ENCODE measurements at regions of chr2 and their contacts with region 1.

Region 1: GRCh38 chr2:131154071-131154531 is 49.0 kb downstream of the PLEKHB2 start:
- DNase-seq: peak in 1 of 2 experiments; percentile 71
- H3K4me3 ChIP-seq: no peak overlapping the region
- H3K27ac ChIP-seq: no peak overlapping the region
- H3K4me1 ChIP-seq: no peaks in the 10 kb centered on the region; a peak in 2 of 7 replicates
- H3K27me3 ChIP-seq: no peaks in the 10 kb centered on the region
- CTCF ChIP-seq: peak; percentile 91 to 96 (median 94)
- EP300 ChIP-seq: no peak
- POLR2A ChIP-seq: no peak
- RAD21 ChIP-seq: peak; percentile 99 to 100

Region 2: GRCh38 chr2:131121464-131121863 is 32.6 kb before region 1 on chr2:
- CTCF ChIA-PET with region 1: no interaction called
- POLR2A ChIA-PET with region 1: no interaction called
- DNase-seq: no peak
- H3K4me3 ChIP-seq: no peak overlapping the region
- H3K27ac ChIP-seq: no peak overlapping the region
- H3K4me1 ChIP-seq: no peaks in the 10 kb centered on the region
- H3K27me3 ChIP-seq: no peaks in the 10 kb centered on the region
- CTCF ChIP-seq: no peak
- EP300 ChIP-seq: no peak
- POLR2A ChIP-seq: no peak
- RAD21 ChIP-seq: no peak

Region 3: DNA sequence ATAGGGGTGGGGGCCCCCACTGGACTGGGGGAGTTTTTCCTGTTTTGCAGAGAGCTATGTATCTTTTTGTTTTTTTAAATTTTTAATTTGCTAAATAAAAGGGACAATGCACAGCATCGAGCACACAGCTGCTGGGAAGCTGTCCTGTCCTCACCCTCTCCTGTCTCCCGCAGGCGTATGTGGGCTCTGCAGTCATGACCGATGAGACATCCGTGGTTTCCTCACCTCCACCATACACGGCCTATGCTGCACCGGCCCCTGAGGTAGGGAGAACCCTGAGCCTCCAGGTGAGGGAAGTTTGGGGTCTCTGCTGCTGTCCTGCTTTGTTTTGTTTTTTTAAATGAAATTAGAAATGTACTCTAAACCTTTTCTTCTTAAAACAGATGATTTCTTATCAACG is 21.4 kb before region 1 on chr2:
- CTCF ChIA-PET with region 1: interaction called, 16 read pairs
- POLR2A ChIA-PET with region 1: no interaction called
- DNase-seq: no peak
- H3K4me3 ChIP-seq: no peak overlapping the region
- H3K27ac ChIP-seq: no peak overlapping the region
- H3K4me1 ChIP-seq: no peaks in the 10 kb centered on the region
- H3K27me3 ChIP-seq: peaks cover 0 to 8% (median 0%) of the 10 kb centered on the region in 4 experiments; a peak in 1 of 7 replicates
- CTCF ChIP-seq: no peak
- EP300 ChIP-seq: no peak
- POLR2A ChIP-seq: no peak
- RAD21 ChIP-seq: no peak

Region 4: GRCh38 chr2:131168538-131168937 is 14.4 kb after region 1 on chr2:
- CTCF ChIA-PET with region 1: interaction called, 28 read pairs
- POLR2A ChIA-PET with region 1: no interaction called
- DNase-seq: no peak
- H3K4me3 ChIP-seq: no peak overlapping the region
- H3K27ac ChIP-seq: no peak overlapping the region
- H3K4me1 ChIP-seq: no peaks in the 10 kb centered on the region
- H3K27me3 ChIP-seq: no peaks in the 10 kb centered on the region
- CTCF ChIP-seq: no peak
- EP300 ChIP-seq: no peak
- POLR2A ChIP-seq: no peak
- RAD21 ChIP-seq: no peak

Measured in H1 (cell line).